HAP-1 (cell line): ENCODE measurements at regions of chr10 and their contacts with region 1.

Region 1: GRCh38 chr10:96306516-96306915 is 2.3 kb downstream of the DNTT start:
- DNase-seq: no peak
- H3K4me3 ChIP-seq: no peak overlapping the region
- H3K4me1 ChIP-seq: peaks cover 35% of the 10 kb centered on the region
- H3K27me3 ChIP-seq: no peaks in the 10 kb centered on the region

Region 2: DNA sequence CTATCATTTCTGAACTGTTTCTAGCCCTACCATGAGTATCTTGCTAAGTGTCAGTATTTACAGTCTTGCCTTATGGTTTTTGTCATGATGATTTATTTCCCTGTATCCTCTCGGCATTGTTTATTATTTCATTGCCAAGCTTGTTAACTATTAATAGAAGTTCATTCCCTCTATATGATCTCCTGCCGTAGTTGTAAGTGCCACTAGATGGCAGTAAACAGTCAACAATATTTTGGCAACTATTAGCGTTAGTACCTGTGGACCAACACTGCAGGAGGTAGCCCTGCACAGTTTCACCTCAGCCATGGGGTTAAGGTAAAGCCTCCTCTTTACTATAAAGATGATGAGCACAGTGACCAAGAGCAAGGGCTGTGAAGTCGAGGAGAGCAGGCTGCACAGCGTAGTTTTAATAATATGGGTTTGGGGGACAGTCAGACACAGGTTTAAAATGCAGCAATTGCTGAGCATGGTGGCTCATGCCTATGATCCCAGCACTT is 289.3 kb before region 1 on chr10:
- in situ Hi-C with region 1: loop called (anchors 25 kb)
- DNase-seq: peak; percentile 57 to 72
- H3K4me3 ChIP-seq: no peak overlapping the region
- H3K4me1 ChIP-seq: no peaks in the 10 kb centered on the region
- H3K27me3 ChIP-seq: peaks cover 7% of the 10 kb centered on the region; the same call in 1 of the 2 replicates